PC-3 (cell line): ENCODE measurements at regions of chr14 and their contacts with region 1.

Region 1: GRCh38 chr14:52695481-52696091 is at the start of gene ERO1A:
- DNase-seq: peak; percentile 88
- ATAC-seq: peak; percentile 69
- H3K4me3 ChIP-seq: peak within 1 kb of the TSS; percentile 79
- H3K27ac ChIP-seq: peak within 1 kb of the TSS; percentile 87
- H3K4me1 ChIP-seq: peaks cover 52% of the 10 kb centered on the region
- H3K27me3 ChIP-seq: no peaks in the 10 kb centered on the region
- CTCF ChIP-seq: no peak
- total RNA-seq, gene ERO1A: 151 and 207 TPM in 2 replicates

Region 2: DNA sequence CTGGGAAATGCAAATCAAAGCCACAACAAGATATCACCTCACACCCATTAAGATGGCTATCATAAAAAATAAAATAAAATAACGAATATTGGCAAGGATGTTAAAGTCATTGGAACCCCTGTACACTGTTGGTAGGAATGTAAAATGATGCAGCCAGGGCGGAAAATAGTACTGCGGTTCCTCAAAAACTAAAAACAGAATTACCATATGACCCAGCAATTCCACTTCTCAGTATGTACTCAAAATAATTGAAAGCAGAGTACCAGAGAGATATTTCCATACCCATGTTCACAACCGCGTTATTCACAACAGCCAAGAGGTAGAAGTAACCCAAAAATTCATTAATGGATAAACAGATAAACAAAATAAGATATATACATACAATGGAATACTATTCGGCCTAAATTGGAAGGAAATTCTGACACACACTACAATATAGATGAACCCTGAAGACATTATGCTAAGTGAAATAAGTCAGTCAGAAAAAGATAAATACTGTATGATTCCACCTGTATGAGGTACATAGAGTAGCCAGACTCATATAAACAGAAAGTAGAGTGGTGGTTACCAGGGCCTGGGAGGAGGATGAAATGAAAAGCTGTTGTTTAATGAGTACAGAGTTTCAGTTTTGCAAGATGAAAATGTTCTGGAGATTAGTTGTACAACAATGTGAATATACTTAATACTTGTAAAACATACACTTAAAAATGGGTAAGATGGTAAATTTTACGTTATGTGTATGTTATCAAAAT is 227.9 kb before region 1 on chr14:
- CTCF ChIA-PET with region 1: interaction called, 11 read pairs
- POLR2A ChIA-PET with region 1: no interaction called
- intact Hi-C with region 1: no loop called
- DNase-seq: no peak
- ATAC-seq: no peak
- H3K4me3 ChIP-seq: no peak overlapping the region
- H3K27ac ChIP-seq: no peak overlapping the region
- H3K4me1 ChIP-seq: no peaks in the 10 kb centered on the region
- H3K27me3 ChIP-seq: no peaks in the 10 kb centered on the region
- CTCF ChIP-seq: no peak

Region 3: GRCh38 chr14:52706724-52707706 is 11.4 kb after region 1 on chr14 and contains the start of gene PSMC6:
- CTCF ChIA-PET with region 1: no interaction called
- POLR2A ChIA-PET with region 1: interaction called, 6 read pairs
- intact Hi-C with region 1: loop called (anchors 1 kb)
- DNase-seq: peak; percentile 91
- ATAC-seq: peak; percentile 95
- H3K4me3 ChIP-seq: peak within 1 kb of the TSS; percentile 97
- H3K27ac ChIP-seq: peak within 1 kb of the TSS; percentile 76
- H3K4me1 ChIP-seq: peaks cover 47% of the 10 kb centered on the region
- H3K27me3 ChIP-seq: no peaks in the 10 kb centered on the region
- CTCF ChIP-seq: no peak
- total RNA-seq, gene PSMC6: 193 and 232 TPM in 2 replicates

Region 4: GRCh38 chr14:52791203-52792096 is 95.9 kb after region 1 on chr14 and contains the start of gene GNPNAT1:
- CTCF ChIA-PET with region 1: no interaction called
- POLR2A ChIA-PET with region 1: no interaction called
- intact Hi-C with region 1: loop called (anchors 2 kb)
- DNase-seq: peak; percentile 97
- ATAC-seq: peak; percentile 90
- H3K4me3 ChIP-seq: peak within 1 kb of the TSS; percentile 78
- H3K27ac ChIP-seq: peak within 1 kb of the TSS; percentile 86
- H3K4me1 ChIP-seq: peaks cover 25% of the 10 kb centered on the region
- H3K27me3 ChIP-seq: no peaks in the 10 kb centered on the region
- CTCF ChIP-seq: no peak
- total RNA-seq, gene GNPNAT1: 38.2 and 44.5 TPM in 2 replicates